Vagina (tissue), 2 donors: ENCODE measurements at regions of chr19 and their contacts with region 1.

Region 1: GRCh38 chr19:57719901-57720519 is 7.4 kb downstream of the ZNF671 start:
- DNase-seq: peak in 1 of 2 donors; percentile 20
- H3K4me3 ChIP-seq: no peak overlapping the region
- H3K27ac ChIP-seq: no peak overlapping the region
- H3K4me1 ChIP-seq: no peaks in the 10 kb centered on the region
- H3K27me3 ChIP-seq: no peaks in the 10 kb centered on the region
- CTCF ChIP-seq: no peak
- POLR2A ChIP-seq: no peak

Region 2: GRCh38 chr19:57559404-57560025 is 160.5 kb before region 1 on chr19 and contains the start of gene ZNF550:
- intact Hi-C with region 1: no loop called
- DNase-seq: no peak
- H3K4me3 ChIP-seq: peak within 1 kb of the TSS; percentile 69 to 85
- H3K27ac ChIP-seq: peak within 1 kb of the TSS; percentile 51
- H3K4me1 ChIP-seq: peaks cover 22% of the 10 kb centered on the region
- H3K27me3 ChIP-seq: no peaks in the 10 kb centered on the region
- CTCF ChIP-seq: no peak
- POLR2A ChIP-seq: peak in 1 of 2 donors; percentile 11
- total RNA-seq, gene ZNF550: 8.1 TPM

Region 3: DNA sequence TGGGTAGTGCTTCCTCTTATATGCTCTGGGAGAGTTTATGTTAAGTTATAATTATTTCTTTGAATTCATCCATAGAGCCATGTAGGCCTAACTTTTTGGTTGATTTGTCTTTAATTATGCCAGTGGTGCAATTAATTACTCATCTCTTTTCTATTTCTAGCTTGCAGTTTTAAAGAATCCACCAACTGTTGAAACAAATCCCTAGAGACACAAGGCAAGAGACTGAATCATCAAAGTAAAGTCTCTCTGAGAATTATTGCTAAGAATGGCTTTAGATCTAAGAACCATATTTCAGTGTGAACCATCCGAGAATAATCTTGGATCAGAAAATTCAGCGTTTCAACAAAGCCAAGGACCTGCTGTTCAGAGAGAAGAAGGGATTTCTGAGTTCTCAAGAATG is 44.1 kb before region 1 on chr19:
- intact Hi-C with region 1: no loop called
- DNase-seq: no peak
- H3K4me3 ChIP-seq: no peak overlapping the region
- H3K27ac ChIP-seq: no peak overlapping the region
- H3K4me1 ChIP-seq: no peaks in the 10 kb centered on the region
- H3K27me3 ChIP-seq: no peaks in the 10 kb centered on the region
- CTCF ChIP-seq: no peak
- POLR2A ChIP-seq: no peak

Region 4: GRCh38 chr19:57746580-57747471 is 26.8 kb after region 1 on chr19 and contains the start of gene ZNF776:
- intact Hi-C with region 1: loop called (anchors 1 kb)
- DNase-seq: no peak
- H3K4me3 ChIP-seq: peak within 1 kb of the TSS; percentile 58 to 91
- H3K27ac ChIP-seq: peak within 1 kb of the TSS; percentile 76
- H3K4me1 ChIP-seq: peaks cover 12% of the 10 kb centered on the region
- H3K27me3 ChIP-seq: no peaks in the 10 kb centered on the region
- CTCF ChIP-seq: no peak
- POLR2A ChIP-seq: no peak
- total RNA-seq, gene ZNF776: 6.9 TPM